CD8-positive, alpha-beta T cell (primary cell): ENCODE measurements at regions of chr1 and their contacts with region 1.

Region 1: GRCh38 chr1:117026361-117026760 is 24.8 kb downstream of the CD101 start:
- DNase-seq: no peak
- ATAC-seq: no peak
- H3K4me3 ChIP-seq: no peak overlapping the region
- H3K4me3 Mint-ChIP-seq: no peak overlapping the region
- H3K27ac ChIP-seq: no peak overlapping the region
- H3K27ac Mint-ChIP-seq: no peak overlapping the region
- H3K4me1 ChIP-seq: no peaks in the 10 kb centered on the region
- H3K4me1 Mint-ChIP-seq: peaks cover 7% of the 10 kb centered on the region
- H3K27me3 ChIP-seq: no peaks in the 10 kb centered on the region
- H3K27me3 Mint-ChIP-seq: no peaks in the 10 kb centered on the region
- CTCF ChIP-seq: no peak

Region 2: DNA sequence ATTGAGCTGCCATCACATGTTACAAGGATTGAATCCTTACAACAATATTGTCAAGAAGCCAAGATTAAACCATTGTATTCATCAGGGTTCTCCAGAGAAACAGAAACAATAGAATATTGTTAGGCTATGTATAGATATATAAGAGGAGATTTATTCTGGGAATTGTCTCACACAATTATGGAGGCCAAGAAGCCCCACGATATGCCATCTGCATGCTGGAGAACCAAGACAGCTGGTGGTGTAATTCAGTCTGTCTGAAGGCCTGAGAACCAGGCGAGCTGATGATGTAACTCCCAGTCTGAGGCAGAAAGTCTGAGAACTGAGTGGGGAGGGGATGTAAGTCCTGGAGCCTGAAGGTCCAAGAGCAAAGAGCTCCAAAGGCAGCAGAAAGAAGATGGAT is 19.3 kb after region 1 on chr1:
- CTCF ChIA-PET with region 1: interaction called, 3 read pairs
- POLR2A ChIA-PET with region 1: no interaction called
- intact Hi-C with region 1: loop called in 1 of 2 experiments (anchors 1 kb)
- DNase-seq: no peak
- ATAC-seq: no peak
- H3K4me3 ChIP-seq: no peak overlapping the region
- H3K4me3 Mint-ChIP-seq: no peak overlapping the region
- H3K27ac ChIP-seq: no peak overlapping the region
- H3K27ac Mint-ChIP-seq: no peak overlapping the region
- H3K4me1 ChIP-seq: peaks cover 32% of the 10 kb centered on the region
- H3K4me1 Mint-ChIP-seq: peaks cover 38% of the 10 kb centered on the region
- H3K27me3 ChIP-seq: no peaks in the 10 kb centered on the region
- H3K27me3 Mint-ChIP-seq: no peaks in the 10 kb centered on the region
- CTCF ChIP-seq: no peak

Region 3: GRCh38 chr1:117096871-117097842 is 70.8 kb after region 1 on chr1:
- CTCF ChIA-PET with region 1: no interaction called
- POLR2A ChIA-PET with region 1: no interaction called
- intact Hi-C with region 1: no loop called
- DNase-seq: no peak
- ATAC-seq: no peak
- H3K4me3 ChIP-seq: no peak overlapping the region
- H3K4me3 Mint-ChIP-seq: no peak overlapping the region
- H3K27ac ChIP-seq: no peak overlapping the region
- H3K27ac Mint-ChIP-seq: no peak overlapping the region
- H3K4me1 ChIP-seq: no peaks in the 10 kb centered on the region
- H3K4me1 Mint-ChIP-seq: no peaks in the 10 kb centered on the region
- H3K27me3 ChIP-seq: no peaks in the 10 kb centered on the region
- H3K27me3 Mint-ChIP-seq: no peaks in the 10 kb centered on the region
- CTCF ChIP-seq: no peak

Region 4: GRCh38 chr1:117527566-117528102 is 501.3 kb after region 1 on chr1:
- CTCF ChIA-PET with region 1: no interaction called
- POLR2A ChIA-PET with region 1: no interaction called
- intact Hi-C with region 1: no loop called
- DNase-seq: no peak
- ATAC-seq: no peak
- H3K4me3 ChIP-seq: no peak overlapping the region
- H3K4me3 Mint-ChIP-seq: no peak overlapping the region
- H3K27ac ChIP-seq: no peak overlapping the region
- H3K27ac Mint-ChIP-seq: no peak overlapping the region
- H3K4me1 ChIP-seq: no peaks in the 10 kb centered on the region
- H3K4me1 Mint-ChIP-seq: no peaks in the 10 kb centered on the region
- H3K27me3 ChIP-seq: no peaks in the 10 kb centered on the region
- H3K27me3 Mint-ChIP-seq: no peaks in the 10 kb centered on the region
- CTCF ChIP-seq: no peak